A549 (cell line): ENCODE measurements at regions of chr9 and their contacts with region 1.

Region 1: GRCh38 chr9:129006328-129007034 is 21.6 kb downstream of the SH3GLB2 start:
- DNase-seq: peak; percentile 78 to 82
- ATAC-seq: peak; percentile 76 to 90
- H3K4me3 ChIP-seq: no peak overlapping the region
- H3K27ac ChIP-seq: no peak overlapping the region
- H3K4me1 ChIP-seq: no peaks in the 10 kb centered on the region
- CTCF ChIP-seq: peak; percentile 93
- EP300 ChIP-seq: no peak
- POLR2A ChIP-seq: no peak
- RAD21 ChIP-seq: peak; percentile 47 to 60

Region 2: GRCh38 chr9:128550770-128551656 is 455.5 kb before region 1 on chr9:
- CTCF ChIA-PET with region 1: no interaction called
- POLR2A ChIA-PET with region 1: no interaction called
- DNase-seq: no peak
- ATAC-seq: no peak
- H3K4me3 ChIP-seq: peak overlapping the region; percentile 75
- H3K27ac ChIP-seq: peak overlapping the region; percentile 79 to 95
- H3K4me1 ChIP-seq: peaks cover 36% of the 10 kb centered on the region
- CTCF ChIP-seq: no peak
- EP300 ChIP-seq: no peak
- POLR2A ChIP-seq: no peak
- RAD21 ChIP-seq: no peak

Region 3: DNA sequence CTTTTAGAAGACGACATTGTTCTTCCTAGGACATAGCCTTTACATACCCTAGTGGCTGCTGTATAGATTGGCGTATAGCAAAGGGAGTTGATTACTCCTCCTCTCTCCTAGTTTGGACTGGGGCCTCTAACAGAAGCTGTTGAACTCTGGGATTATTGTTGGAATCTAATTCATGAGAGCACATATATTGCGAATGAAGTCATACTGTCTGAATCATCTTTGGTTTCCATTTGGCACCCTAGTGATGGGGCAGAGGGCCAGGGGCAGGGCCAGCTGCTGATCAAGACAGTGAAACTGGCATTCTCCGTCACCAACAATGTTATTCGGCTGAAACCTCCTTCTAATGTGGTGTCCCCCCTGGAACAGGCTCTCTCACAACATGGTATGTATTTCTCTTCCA is 18.7 kb before region 1 on chr9:
- CTCF ChIA-PET with region 1: interaction called, 64 read pairs
- POLR2A ChIA-PET with region 1: no interaction called
- DNase-seq: no peak
- ATAC-seq: peak; percentile 46 to 68
- H3K4me3 ChIP-seq: no peak overlapping the region
- H3K27ac ChIP-seq: no peak overlapping the region
- H3K4me1 ChIP-seq: peaks cover 7% of the 10 kb centered on the region; the same call in 1 of the 3 replicates
- CTCF ChIP-seq: no peak
- EP300 ChIP-seq: no peak
- POLR2A ChIP-seq: no peak
- RAD21 ChIP-seq: no peak

Region 4: GRCh38 chr9:128992995-128993394 is 13.5 kb before region 1 on chr9:
- CTCF ChIA-PET with region 1: interaction called, 64 read pairs
- POLR2A ChIA-PET with region 1: no interaction called
- DNase-seq: peak in 1 of 2 experiments; percentile 43
- ATAC-seq: peak; percentile 82 to 86; a peak in 5 of 6 replicates
- H3K4me3 ChIP-seq: no peak overlapping the region
- H3K27ac ChIP-seq: no peak overlapping the region
- H3K4me1 ChIP-seq: no peaks in the 10 kb centered on the region; the same call in 2 of the 3 replicates
- CTCF ChIP-seq: no peak
- EP300 ChIP-seq: no peak
- POLR2A ChIP-seq: no peak
- RAD21 ChIP-seq: peak in 1 of 2 experiments; percentile 24; a peak in 1 of 5 replicates

Region 5: GRCh38 chr9:129023036-129023907 is 16.8 kb after region 1 on chr9:
- CTCF ChIA-PET with region 1: interaction called, 136 read pairs
- POLR2A ChIA-PET with region 1: interaction called, 6 read pairs
- DNase-seq: no peak
- ATAC-seq: no peak
- H3K4me3 ChIP-seq: no peak overlapping the region
- H3K27ac ChIP-seq: no peak overlapping the region
- H3K4me1 ChIP-seq: peaks cover 19% of the 10 kb centered on the region
- CTCF ChIP-seq: no peak
- EP300 ChIP-seq: no peak
- POLR2A ChIP-seq: no peak
- RAD21 ChIP-seq: no peak

Region 6: DNA sequence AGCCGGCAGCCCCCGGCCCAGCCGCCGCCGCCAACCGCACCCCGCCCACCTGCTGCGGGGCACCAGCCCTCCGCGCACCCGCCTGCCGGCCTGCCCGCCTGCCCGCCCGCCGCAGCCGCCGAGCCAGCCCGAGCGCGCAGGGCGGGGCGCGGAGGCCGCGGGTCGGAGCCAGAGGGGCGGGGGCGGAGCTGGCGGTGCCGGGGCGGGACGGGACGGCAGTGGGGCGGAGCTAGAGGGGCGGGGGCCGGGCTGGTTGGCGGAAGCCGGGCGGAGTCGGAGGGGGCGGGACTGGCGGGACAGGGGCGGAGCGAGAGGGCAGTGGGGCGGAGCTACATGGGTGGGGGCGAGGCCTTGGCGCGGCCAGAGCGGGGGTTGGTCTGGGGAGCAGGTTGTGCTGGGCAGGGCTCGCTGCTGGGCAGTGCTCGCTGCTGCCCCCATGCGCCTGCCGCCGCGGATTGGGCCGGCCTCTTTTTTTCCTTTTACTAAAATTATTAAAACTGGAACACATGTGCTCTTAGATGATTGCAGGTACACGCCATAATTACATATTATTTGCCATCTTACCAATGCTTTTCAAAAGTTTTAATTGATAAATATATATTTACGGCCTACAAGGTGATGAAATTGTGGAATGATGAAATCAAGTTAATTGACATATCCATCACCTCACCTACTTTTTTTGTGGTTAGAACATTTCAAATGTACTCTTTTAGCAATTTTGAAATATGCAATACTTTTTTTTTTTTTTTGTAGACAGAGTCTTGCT is 21.9 kb after region 1 on chr9 and contains the start of gene SH3GLB2:
- CTCF ChIA-PET with region 1: interaction called, 136 read pairs
- POLR2A ChIA-PET with region 1: interaction called, 6 read pairs
- DNase-seq: peak; percentile 83 to 97
- ATAC-seq: peak; percentile 78 to 91
- H3K4me3 ChIP-seq: peak within 1 kb of the TSS; percentile 83
- H3K27ac ChIP-seq: peak within 1 kb of the TSS; percentile 82 to 93
- H3K4me1 ChIP-seq: peaks cover 18% of the 10 kb centered on the region
- CTCF ChIP-seq: peak; percentile 82
- EP300 ChIP-seq: no peak
- POLR2A ChIP-seq: peak; percentile 62
- RAD21 ChIP-seq: peak; percentile 39 to 48; a peak in 3 of 5 replicates
- polyA plus RNA-seq, gene SH3GLB2: 28.3 and 30.0 TPM in 2 replicates